MCF 10A (cell line): ENCODE measurements at regions of chr1 and their contacts with region 1.

Region 1: GRCh38 chr1:92901699-92902405 is 59.4 kb downstream of the DIPK1A start:
- DNase-seq: no peak
- H3K4me3 Mint-ChIP-seq: no peak overlapping the region
- H3K27ac Mint-ChIP-seq: no peak overlapping the region
- H3K4me1 Mint-ChIP-seq: no peaks in the 10 kb centered on the region
- H3K27me3 Mint-ChIP-seq: no peaks in the 10 kb centered on the region
- CTCF ChIP-seq: no peak

Region 2: DNA sequence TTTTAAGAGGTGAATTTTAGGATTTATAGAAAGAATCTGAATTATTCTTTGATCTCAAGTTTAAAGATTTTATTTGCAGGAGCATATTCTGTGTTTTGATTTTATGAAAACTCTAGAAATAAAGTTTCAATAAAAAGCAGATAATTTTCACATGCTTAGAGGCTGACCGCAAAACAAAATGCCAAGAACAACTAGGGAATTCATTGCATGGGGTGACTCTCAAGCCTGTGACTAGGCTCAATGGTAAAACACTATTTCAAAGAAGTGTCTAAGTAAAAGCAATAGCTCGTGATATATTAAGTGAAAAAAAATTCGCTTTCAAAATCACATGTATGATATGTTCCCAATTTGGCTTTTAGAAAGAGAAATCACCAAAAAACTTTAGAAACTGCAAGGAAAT is 20.5 kb before region 1 on chr1:
- CTCF ChIA-PET with region 1: no interaction called
- POLR2A ChIA-PET with region 1: no interaction called
- intact Hi-C with region 1: loop called (anchors 2 kb)
- DNase-seq: no peak
- H3K4me3 Mint-ChIP-seq: no peak overlapping the region
- H3K27ac Mint-ChIP-seq: no peak overlapping the region
- H3K4me1 Mint-ChIP-seq: no peaks in the 10 kb centered on the region
- H3K27me3 Mint-ChIP-seq: no peaks in the 10 kb centered on the region
- CTCF ChIP-seq: no peak